Stomach (tissue), 19 donors: ENCODE measurements at regions of chr9 and their contacts with region 1.

Region 1: DNA sequence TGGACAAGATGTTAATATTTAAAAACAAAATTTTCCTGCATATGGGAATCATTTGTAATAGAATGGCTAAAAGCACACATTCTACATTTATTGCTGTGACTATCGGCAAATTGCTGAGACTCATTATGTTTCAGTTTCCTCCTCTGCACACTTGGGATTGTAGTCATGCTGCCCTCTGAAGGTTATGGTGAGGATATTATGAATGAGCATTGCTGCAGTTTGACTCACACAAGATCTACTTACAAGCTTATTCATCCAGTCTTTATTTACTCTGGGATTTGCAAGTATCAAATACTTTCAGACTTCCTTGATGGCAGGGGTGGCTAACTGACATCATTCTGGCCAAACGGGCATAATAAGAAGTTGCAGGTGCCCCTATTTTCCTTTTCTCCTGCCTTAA is 9.5 kb upstream of the NFIL3 start:
- DNase-seq: peak in 1 of 2 donors; percentile 76
- H3K4me3 ChIP-seq: no peak overlapping the region
- H3K27ac ChIP-seq: peak overlapping the region in 1 of 5 donors; percentile 45
- H3K4me1 ChIP-seq: peaks cover 0 to 24% (median 3%) of the 10 kb centered on the region in 4 donors
- H3K27me3 ChIP-seq: no peaks in the 10 kb centered on the region
- CTCF ChIP-seq: peak in 5 of 7 experiments; percentile 34 to 50 (median 45)
- EP300 ChIP-seq: no peak
- POLR2A ChIP-seq: no peak

Region 2: DNA sequence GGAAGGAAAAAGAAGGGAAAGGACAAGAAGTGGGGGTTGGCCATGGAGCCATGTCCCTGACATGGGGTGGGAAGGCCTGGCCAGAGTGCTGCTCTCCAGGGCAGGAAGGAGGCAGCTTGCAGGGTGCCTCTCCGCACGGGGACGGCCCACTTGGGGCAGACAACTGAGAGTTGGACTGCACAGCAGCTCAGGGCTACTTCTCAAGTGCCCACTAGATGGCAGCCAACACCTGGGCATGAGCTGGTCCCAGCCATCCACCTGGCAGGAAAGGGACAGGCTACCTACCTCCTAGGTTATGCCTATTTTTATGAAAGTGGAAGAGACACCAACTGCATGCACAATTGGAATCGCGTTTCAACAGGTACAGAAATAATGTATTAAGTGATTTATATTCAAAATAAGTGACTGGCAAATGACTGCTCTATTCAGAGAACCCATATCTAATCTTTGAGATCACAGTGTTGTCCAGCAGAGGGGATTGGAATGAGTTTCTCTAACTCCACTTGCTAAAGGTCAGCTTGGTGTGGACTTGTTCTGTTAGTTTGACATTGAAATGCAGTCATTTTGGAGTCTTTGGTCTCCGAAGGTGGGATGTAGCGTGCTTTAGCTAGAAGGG is 518.2 kb before region 1 on chr9:
- intact Hi-C with region 1: loop called (anchors 10 kb)
- DNase-seq: peak; percentile 81 to 93
- H3K4me3 ChIP-seq: no peak overlapping the region
- H3K27ac ChIP-seq: no peak overlapping the region
- H3K4me1 ChIP-seq: peaks cover 0 to 6% (median 2%) of the 10 kb centered on the region in 4 donors
- H3K27me3 ChIP-seq: peaks cover 0 to 15% (median 0%) of the 10 kb centered on the region in 3 donors
- CTCF ChIP-seq: peak in 6 of 7 experiments; percentile 17 to 97 (median 88)
- EP300 ChIP-seq: no peak
- POLR2A ChIP-seq: no peak

Region 3: DNA sequence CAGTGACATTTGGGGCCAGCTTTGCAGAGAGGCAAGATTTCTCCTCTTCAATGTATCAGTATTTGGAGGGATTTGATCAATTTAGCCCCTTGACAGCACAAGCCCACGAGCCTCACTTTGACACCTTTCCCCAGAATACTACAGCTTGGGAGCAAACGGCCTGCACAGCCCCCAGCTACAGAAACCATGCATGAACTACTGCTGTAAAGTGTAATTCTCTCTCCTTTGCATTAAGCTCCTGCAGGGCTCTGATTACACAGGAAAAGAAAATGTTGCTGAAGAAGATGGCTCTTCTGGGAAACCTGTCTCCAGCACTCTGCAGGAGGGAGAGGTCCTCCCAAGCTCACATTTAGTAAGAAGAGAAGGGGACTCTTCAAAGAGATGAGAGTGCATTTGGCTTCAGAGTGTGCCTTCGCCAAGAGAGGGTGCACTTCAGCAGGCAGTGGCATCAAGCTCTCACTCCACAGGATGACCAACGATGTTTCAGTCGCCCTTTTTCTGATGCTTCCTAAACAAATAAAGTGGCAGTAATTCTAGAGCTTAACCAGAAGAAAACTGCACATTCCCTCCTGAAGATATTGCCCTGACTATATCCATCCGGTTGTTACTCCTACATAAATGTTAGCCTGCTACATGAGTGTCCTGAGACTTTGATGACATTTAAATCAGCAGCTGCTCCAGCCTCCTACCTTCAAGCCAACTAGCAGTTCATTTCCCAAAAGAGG is 343.6 kb before region 1 on chr9:
- intact Hi-C with region 1: loop called (anchors 10 kb)
- DNase-seq: peak; percentile 43 to 70
- H3K4me3 ChIP-seq: no peak overlapping the region
- H3K27ac ChIP-seq: peak overlapping the region in 1 of 5 donors; percentile 35
- H3K4me1 ChIP-seq: no peaks in the 10 kb centered on the region
- H3K27me3 ChIP-seq: no peaks in the 10 kb centered on the region
- CTCF ChIP-seq: peak in 5 of 7 experiments; percentile 24 to 46 (median 43)
- EP300 ChIP-seq: no peak
- POLR2A ChIP-seq: no peak